Naive thymus-derived CD4-positive, alpha-beta T cell (primary cell): ENCODE measurements at regions of chr12 and their contacts with region 1.

Region 1: DNA sequence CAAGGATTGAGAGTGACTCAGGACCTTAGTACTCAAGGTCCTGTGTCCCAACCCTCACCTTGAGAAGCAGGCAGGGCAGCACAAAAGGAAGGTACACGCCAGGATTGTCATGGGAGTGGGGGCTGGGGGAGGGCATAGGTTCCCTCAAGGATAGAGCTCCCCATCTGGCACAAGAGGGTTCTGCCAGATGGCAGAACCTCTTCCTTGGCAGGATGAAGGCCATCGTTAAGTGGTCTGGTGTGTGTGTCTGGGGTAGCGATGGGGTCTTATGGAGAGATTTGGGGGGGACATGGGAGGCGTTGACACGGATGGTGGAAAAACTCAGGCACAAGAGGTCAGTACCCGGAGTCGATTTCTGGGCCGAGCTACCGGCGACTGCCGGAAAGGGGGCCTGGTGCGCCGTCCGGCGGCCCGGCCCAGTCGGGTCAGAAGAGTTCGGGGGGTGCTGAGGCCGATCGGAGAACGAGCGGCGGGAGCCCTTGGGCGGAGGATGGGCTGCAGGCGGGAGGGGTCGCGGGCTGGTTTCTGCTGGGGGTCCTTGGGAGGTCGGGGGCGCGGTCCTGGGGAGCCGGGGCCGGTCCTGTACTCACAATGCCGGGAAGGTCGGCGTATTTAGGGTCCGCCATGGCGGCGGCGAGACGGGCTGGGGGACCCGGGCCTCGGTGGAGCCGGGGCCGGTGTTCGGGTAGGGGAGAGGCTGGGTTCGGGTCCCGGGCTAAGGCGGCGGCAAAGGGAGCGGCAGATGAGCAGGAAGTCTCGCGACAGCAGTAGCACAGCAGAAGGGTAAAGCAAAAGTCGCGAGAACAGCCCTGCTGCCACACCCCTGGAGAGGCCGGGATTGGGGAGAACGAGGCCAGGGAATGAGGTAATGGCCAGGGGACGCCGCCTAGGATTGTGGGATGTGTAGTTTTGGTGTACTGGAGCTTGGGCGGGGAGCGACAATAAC is at the start of gene DCTN2:
- DNase-seq: peak; percentile 63 to 94 (median 88)
- ATAC-seq: peak; percentile 98
- H3K4me3 ChIP-seq: peak within 1 kb of the TSS; percentile 74
- H3K4me3 Mint-ChIP-seq: peak within 1 kb of the TSS; percentile 88 to 100 (median 98)
- H3K27ac ChIP-seq: peak within 1 kb of the TSS; percentile 88
- H3K27ac Mint-ChIP-seq: peak within 1 kb of the TSS; percentile 85 to 96 (median 92)
- H3K4me1 ChIP-seq: peaks cover 10 to 16% of the 10 kb centered on the region in 2 donors
- H3K4me1 Mint-ChIP-seq: peaks cover 28 to 64% (median 55%) of the 10 kb centered on the region in 7 donors
- H3K27me3 ChIP-seq: no peaks in the 10 kb centered on the region
- H3K27me3 Mint-ChIP-seq: peaks cover 0 to 28% (median 0%) of the 10 kb centered on the region in 5 donors
- total RNA-seq, gene DCTN2: 52.1 to 78.8 (median 63.0) TPM

Region 2: GRCh38 chr12:57476162-57476992 is 70.3 kb before region 1 on chr12:
- CTCF ChIA-PET with region 1: no interaction called
- POLR2A ChIA-PET with region 1: interaction called, 7 read pairs
- intact Hi-C with region 1: loop called in 1 of 2 experiments (anchors 1 kb)
- DNase-seq: peak; percentile 58 to 85 (median 70)
- ATAC-seq: peak; percentile 53
- H3K4me3 ChIP-seq: peak overlapping the region; percentile 95
- H3K4me3 Mint-ChIP-seq: peak overlapping the region; percentile 84 to 100 (median 98)
- H3K27ac ChIP-seq: peak overlapping the region; percentile 94
- H3K27ac Mint-ChIP-seq: peak overlapping the region; percentile 97 to 100 (median 100)
- H3K4me1 ChIP-seq: peaks cover 59 to 70% of the 10 kb centered on the region in 2 donors
- H3K4me1 Mint-ChIP-seq: peaks cover 66 to 85% (median 76%) of the 10 kb centered on the region in 7 donors
- H3K27me3 ChIP-seq: no peaks in the 10 kb centered on the region
- H3K27me3 Mint-ChIP-seq: no peaks in the 10 kb centered on the region

Region 3: DNA sequence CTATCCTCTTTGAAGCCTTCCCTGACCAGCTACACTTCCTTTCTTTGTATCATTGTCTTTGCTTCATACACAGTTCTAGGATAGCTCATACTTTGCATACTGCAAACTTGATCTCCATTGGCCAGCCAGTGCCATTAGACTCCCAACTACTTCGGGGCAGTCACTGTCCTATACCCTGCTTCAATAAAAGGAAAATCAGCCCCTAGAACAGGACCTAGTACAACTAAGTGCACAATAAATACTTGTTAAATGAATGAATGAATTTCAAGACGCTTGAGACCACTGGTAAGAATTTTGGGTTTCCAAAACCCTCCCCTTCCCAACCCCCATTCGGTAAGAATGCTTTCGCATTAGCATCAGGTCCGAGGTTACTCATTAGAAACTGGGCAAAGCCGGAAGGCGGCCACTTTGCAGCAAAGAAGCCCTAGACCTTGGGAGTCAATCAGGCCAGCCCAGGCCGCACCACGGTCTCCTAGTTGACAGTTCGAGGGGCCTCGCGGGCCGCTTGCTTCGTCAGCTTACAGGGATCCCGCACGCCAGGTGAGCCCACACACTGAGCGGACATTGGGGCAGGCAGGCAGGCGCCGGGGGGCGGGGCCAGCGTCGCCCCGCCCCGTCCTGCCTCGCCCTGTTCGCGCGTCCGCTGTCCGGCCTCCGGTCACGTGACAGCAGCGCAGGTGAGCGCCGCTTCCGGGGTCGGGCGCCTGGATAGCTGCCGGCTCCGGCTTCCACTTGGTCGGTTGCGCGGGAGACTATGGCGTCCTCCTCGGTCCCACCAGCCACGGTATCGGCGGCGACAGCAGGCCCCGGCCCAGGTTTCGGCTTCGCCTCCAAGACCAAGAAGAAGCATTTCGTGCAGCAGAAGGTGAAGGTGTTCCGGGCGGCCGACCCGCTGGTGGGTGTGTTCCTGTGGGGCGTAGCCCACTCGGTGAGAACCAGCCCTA is 44.1 kb after region 1 on chr12 and contains the start of gene PIP4K2C:
- CTCF ChIA-PET with region 1: interaction called, 5 read pairs
- POLR2A ChIA-PET with region 1: no interaction called
- intact Hi-C with region 1: loop called (anchors 1 to 2 kb)
- DNase-seq: peak; percentile 49 to 79 (median 65)
- ATAC-seq: peak; percentile 95
- H3K4me3 ChIP-seq: peak within 1 kb of the TSS; percentile 83
- H3K4me3 Mint-ChIP-seq: peak within 1 kb of the TSS; percentile 84 to 92 (median 89)
- H3K27ac ChIP-seq: peak within 1 kb of the TSS; percentile 76
- H3K27ac Mint-ChIP-seq: peak within 1 kb of the TSS; percentile 79 to 94 (median 91)
- H3K4me1 ChIP-seq: peaks cover 14 to 21% of the 10 kb centered on the region in 2 donors
- H3K4me1 Mint-ChIP-seq: peaks cover 24 to 35% (median 26%) of the 10 kb centered on the region in 7 donors
- H3K27me3 ChIP-seq: no peaks in the 10 kb centered on the region
- H3K27me3 Mint-ChIP-seq: peaks cover 0 to 3% (median 0%) of the 10 kb centered on the region in 5 donors
- total RNA-seq, gene PIP4K2C: 20.1 to 29.7 (median 21.9) TPM